Natural killer cell (primary cell): ENCODE measurements at regions of chr3 and their contacts with region 1.

Region 1: GRCh38 chr3:32460031-32460749 is 42.5 kb downstream of the CMTM6 start:
- DNase-seq: peak; percentile 42 to 96
- ATAC-seq: peak; percentile 85 to 89 (median 87)
- H3K4me3 ChIP-seq: no peak overlapping the region
- H3K4me3 Mint-ChIP-seq: peak overlapping the region; percentile 83
- H3K27ac ChIP-seq: peak overlapping the region; percentile 89
- H3K27ac Mint-ChIP-seq: no peak overlapping the region
- H3K4me1 ChIP-seq: peaks cover 61% of the 10 kb centered on the region
- H3K4me1 Mint-ChIP-seq: peaks cover 9 to 29% of the 10 kb centered on the region in 2 donors
- H3K27me3 ChIP-seq: no peaks in the 10 kb centered on the region
- H3K27me3 Mint-ChIP-seq: no peaks in the 10 kb centered on the region
- CTCF ChIP-seq: no peak

Region 2: DNA sequence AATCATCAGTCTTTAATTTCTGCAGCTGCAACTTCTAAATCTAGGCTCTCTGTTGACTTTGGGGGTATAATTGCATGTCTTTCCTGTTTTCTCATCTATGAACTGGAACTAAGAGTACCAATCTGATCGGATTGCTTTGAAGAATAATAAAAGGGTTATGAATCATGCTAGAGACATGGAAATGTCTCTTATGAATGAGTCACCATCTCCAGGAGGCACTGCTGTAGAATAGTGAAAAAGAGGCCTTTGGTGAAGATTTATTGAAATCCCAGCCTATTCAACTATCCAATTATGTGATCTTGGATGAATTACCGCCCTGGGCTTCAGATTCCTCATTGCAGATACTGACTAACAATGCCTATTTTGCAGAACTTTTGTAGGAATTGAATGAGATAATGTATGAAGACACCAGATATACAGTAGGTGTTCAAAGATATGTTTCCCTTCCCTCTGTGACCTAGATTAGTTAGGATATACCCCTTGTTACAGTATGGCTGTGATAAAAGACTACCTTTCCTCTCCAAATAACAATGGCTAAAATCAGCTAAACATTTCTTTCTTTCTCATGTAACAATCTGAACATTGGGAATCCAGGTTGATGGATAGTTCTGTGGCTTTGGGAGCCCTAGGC is 233.2 kb before region 1 on chr3:
- intact Hi-C with region 1: no loop called
- DNase-seq: no peak
- ATAC-seq: no peak
- H3K4me3 ChIP-seq: no peak overlapping the region
- H3K4me3 Mint-ChIP-seq: no peak overlapping the region
- H3K27ac ChIP-seq: no peak overlapping the region
- H3K27ac Mint-ChIP-seq: no peak overlapping the region
- H3K4me1 ChIP-seq: no peaks in the 10 kb centered on the region
- H3K4me1 Mint-ChIP-seq: no peaks in the 10 kb centered on the region
- H3K27me3 ChIP-seq: no peaks in the 10 kb centered on the region
- H3K27me3 Mint-ChIP-seq: peaks cover 0 to 11% of the 10 kb centered on the region in 2 donors
- CTCF ChIP-seq: no peak

Region 3: GRCh38 chr3:32432711-32433530 is 27.3 kb before region 1 on chr3:
- intact Hi-C with region 1: loop called (anchors 1 kb)
- DNase-seq: peak in 1 of 2 donors; percentile 79
- ATAC-seq: peak; percentile 49 to 54 (median 54)
- H3K4me3 ChIP-seq: no peak overlapping the region
- H3K4me3 Mint-ChIP-seq: peak overlapping the region; percentile 72
- H3K27ac ChIP-seq: peak overlapping the region; percentile 71
- H3K27ac Mint-ChIP-seq: peak overlapping the region; percentile 81 to 92
- H3K4me1 ChIP-seq: peaks cover 51% of the 10 kb centered on the region
- H3K4me1 Mint-ChIP-seq: peaks cover 47 to 53% of the 10 kb centered on the region in 2 donors
- H3K27me3 ChIP-seq: no peaks in the 10 kb centered on the region
- H3K27me3 Mint-ChIP-seq: no peaks in the 10 kb centered on the region
- CTCF ChIP-seq: no peak